BJ (cell line): ENCODE measurements at regions of chr3 and their contacts with region 1.

Region 1: GRCh38 chr3:141452036-141452435 is 34.8 kb upstream of the RASA2 start:
- DNase-seq: no peak
- H3K4me3 ChIP-seq: no peak overlapping the region
- H3K27me3 ChIP-seq: no peaks in the 10 kb centered on the region
- CTCF ChIP-seq: peak; percentile 71

Region 2: DNA sequence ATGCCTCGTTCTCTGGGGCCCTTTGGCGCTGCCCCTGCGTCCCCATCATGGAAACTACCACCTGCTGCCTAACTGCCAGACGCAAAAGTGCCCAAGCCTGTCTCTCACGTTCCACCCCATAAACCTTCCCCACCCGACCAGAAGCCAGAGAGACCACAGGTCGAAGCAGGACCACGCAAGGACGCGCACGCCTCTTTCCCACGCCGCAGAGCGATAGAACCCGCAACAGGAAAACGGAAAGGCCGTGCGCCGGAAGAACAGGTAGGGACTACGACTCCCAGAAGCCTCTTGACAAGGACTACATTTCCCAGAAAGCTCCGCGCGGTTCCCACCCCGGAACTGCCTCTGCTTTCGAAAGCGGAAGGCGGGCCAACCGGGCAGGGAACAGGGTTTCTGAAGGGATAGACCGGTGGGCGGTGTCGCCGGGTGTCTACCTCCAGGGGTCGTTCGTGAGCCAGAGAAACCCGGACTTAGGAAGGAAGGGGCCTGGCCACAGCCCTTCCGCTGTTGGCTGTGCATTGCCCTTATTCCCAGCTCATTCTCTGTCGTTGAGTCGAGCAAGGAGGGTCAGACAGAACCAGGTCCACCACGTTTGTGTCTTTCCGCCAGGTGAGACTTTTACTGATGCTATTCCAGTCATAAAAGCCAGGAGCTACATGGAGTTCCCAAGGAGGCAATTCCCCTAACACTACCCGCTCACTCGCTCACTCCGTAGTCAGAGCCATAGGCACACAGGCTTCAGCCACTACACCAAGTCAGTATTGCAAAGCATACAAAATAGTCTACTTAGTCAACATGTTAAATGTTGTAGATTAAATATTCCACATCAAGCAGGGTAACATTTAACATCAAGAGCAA is 140.3 kb before region 1 on chr3:
- CTCF ChIA-PET with region 1: interaction called, 282 read pairs
- POLR2A ChIA-PET with region 1: interaction called, 5 read pairs
- DNase-seq: peak; percentile 87
- H3K4me3 ChIP-seq: peak overlapping the region; percentile 64
- H3K27me3 ChIP-seq: no peaks in the 10 kb centered on the region
- CTCF ChIP-seq: peak; percentile 86

Region 3: GRCh38 chr3:141366285-141367037 is 85.6 kb before region 1 on chr3:
- CTCF ChIA-PET with region 1: interaction called, 70 read pairs
- POLR2A ChIA-PET with region 1: interaction called, 5 read pairs
- DNase-seq: peak; percentile 82
- H3K4me3 ChIP-seq: no peak overlapping the region
- H3K27me3 ChIP-seq: no peaks in the 10 kb centered on the region
- CTCF ChIP-seq: peak; percentile 30; the same call in 1 of the 2 replicates

Region 4: DNA sequence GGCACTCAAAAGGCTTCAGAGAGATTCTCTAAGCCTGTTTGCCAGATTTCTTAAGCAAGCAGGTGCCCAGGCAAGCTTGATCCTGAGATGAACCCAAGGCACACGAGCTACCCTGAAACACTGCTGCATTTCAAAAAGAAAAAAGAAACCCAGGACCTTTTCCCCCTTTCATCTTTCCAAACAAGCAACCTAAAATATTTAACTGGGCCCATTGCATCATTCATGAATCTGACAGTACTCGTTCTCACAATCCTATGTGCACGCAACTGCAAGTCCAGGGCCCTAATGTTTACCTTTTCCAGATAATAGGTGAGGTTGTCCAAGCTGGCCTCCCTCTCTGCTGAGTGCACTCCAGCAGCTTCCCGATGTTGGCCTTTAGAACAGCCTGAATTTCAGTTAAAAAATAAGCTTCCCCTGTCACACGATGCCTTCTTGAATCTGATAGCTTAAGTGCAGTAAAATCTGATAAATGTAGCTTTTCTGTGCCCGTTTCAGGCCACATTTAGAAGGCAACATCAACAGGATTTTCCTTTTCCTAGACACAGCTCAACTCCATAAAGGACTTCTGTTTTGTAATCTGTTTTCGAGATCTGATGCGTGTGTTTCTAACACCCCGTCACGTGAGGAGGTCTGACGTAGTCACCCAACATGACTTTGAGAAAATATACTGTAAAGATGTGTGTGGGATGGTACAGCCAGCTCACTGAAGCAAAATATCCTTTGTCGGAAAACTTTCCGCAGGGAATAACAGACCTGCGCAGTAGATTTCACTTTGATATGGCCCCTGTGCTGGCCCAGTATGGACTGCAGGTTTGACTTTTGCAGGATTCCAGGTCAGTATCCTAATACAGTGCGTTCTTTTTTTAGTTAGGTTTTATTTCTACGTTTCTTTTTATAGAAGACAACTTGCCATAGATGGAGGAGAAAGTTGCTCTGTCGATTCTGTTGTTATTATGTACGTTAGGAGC is 20.3 kb before region 1 on chr3:
- CTCF ChIA-PET with region 1: interaction called, 4 read pairs
- POLR2A ChIA-PET with region 1: interaction called, 15 read pairs
- DNase-seq: no peak
- H3K4me3 ChIP-seq: no peak overlapping the region
- H3K27me3 ChIP-seq: no peaks in the 10 kb centered on the region
- CTCF ChIP-seq: no peak

Region 5: DNA sequence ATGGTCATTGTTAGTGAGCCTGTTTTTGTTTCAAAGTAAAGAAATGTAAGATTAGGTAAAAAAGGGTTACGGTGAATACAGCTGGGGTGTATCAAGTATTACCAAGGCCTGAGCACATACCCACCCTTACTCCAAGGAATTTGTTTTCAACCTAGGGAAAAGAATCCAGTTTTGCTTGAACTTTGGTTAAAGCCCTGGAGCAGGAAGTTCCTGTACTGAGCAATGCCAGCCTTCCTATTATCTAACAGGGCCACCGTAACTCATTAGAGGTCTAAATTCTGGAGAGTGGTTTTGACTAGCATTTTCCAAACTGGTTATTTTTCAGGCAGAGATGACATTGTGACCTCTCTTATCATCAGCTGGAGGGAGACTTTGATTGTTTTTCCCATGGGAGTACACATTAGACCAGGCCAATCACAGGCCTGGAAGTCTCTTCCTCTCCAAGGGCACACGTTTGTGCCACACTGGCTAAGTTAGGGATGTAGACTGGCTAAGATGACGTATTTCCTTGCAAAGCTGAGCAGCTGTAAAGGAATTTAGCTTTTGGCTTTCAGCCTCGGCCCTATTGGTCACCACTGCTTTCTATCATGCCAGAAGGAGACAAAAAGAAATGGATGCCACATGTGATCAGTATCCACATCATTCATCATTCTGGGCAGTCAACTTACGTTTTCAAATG is 258.7 kb after region 1 on chr3:
- CTCF ChIA-PET with region 1: no interaction called
- POLR2A ChIA-PET with region 1: no interaction called
- DNase-seq: peak; percentile 62
- H3K4me3 ChIP-seq: no peak overlapping the region
- H3K27me3 ChIP-seq: no peaks in the 10 kb centered on the region
- CTCF ChIP-seq: no peak